ENCODE measurements at regions of chr7 and their contacts with region 1.

Region 1: GRCh38 chr7:128739048-128739962 is at the start of gene CALU:
- DNase-seq: peak; percentile 95
- H3K4me3 Mint-ChIP-seq: peak within 1 kb of the TSS; percentile 100
- H3K27ac Mint-ChIP-seq: peak within 1 kb of the TSS; percentile 98
- H3K4me1 Mint-ChIP-seq: peaks cover 38% of the 10 kb centered on the region
- H3K27me3 Mint-ChIP-seq: no peaks in the 10 kb centered on the region
- CTCF ChIP-seq: no peak
- total RNA-seq, gene CALU: 147 and 184 TPM in 2 replicates

Region 2: GRCh38 chr7:128697302-128697905 is 41.9 kb before region 1 on chr7:
- CTCF ChIA-PET with region 1: no interaction called
- POLR2A ChIA-PET with region 1: no interaction called
- intact Hi-C with region 1: loop called (anchors 5 kb)
- DNase-seq: peak; percentile 75
- H3K4me3 Mint-ChIP-seq: peak overlapping the region; percentile 70
- H3K27ac Mint-ChIP-seq: no peak overlapping the region
- H3K4me1 Mint-ChIP-seq: peaks cover 6% of the 10 kb centered on the region
- H3K27me3 Mint-ChIP-seq: peaks cover 12% of the 10 kb centered on the region
- CTCF ChIP-seq: no peak

Region 3: GRCh38 chr7:128710481-128710880 is 28.8 kb before region 1 on chr7:
- CTCF ChIA-PET with region 1: interaction called, 5 read pairs
- POLR2A ChIA-PET with region 1: interaction called, 9 read pairs
- intact Hi-C with region 1: loop called (anchors 1 kb)
- DNase-seq: peak; percentile 75
- H3K4me3 Mint-ChIP-seq: no peak overlapping the region
- H3K27ac Mint-ChIP-seq: peak overlapping the region; percentile 57
- H3K4me1 Mint-ChIP-seq: peaks cover 14% of the 10 kb centered on the region
- H3K27me3 Mint-ChIP-seq: no peaks in the 10 kb centered on the region
- CTCF ChIP-seq: no peak

Region 4: DNA sequence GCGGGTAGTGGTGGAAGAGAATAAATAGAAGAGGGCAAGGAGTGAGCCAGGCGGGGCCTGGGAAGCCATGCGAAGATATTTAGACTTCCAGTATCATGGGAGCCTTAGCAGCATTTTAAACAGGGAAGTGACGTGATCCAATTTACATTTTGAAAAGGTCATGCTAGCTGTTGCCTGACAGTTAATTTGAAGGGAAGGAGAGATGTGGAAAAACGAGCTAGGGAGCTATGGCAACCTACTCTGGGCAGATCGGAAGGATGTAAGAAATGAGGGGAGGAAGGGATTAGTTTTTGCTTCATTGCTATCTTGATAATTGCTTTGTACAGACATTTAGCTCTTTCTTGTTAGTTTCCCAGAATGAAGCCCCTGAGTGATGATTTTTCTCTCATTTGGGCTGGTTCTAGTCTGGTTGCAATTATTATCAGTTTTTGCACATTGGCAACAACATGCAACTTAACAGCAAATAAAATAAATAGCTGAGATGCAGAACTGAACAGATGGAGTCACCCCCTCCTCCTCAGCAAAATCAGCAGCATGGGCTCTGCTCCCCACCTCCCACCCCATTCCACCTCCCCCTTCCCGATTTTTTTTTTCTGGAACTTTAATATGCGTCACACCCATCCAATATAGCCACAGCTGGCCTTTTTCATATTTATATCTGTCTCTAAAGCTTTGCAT is 13.1 kb before region 1 on chr7:
- CTCF ChIA-PET with region 1: interaction called, 4 read pairs
- POLR2A ChIA-PET with region 1: interaction called, 10 read pairs
- intact Hi-C with region 1: no loop called
- DNase-seq: no peak
- H3K4me3 Mint-ChIP-seq: no peak overlapping the region
- H3K27ac Mint-ChIP-seq: no peak overlapping the region
- H3K4me1 Mint-ChIP-seq: peaks cover 10% of the 10 kb centered on the region
- H3K27me3 Mint-ChIP-seq: peaks cover 12% of the 10 kb centered on the region
- CTCF ChIP-seq: no peak

Region 5: DNA sequence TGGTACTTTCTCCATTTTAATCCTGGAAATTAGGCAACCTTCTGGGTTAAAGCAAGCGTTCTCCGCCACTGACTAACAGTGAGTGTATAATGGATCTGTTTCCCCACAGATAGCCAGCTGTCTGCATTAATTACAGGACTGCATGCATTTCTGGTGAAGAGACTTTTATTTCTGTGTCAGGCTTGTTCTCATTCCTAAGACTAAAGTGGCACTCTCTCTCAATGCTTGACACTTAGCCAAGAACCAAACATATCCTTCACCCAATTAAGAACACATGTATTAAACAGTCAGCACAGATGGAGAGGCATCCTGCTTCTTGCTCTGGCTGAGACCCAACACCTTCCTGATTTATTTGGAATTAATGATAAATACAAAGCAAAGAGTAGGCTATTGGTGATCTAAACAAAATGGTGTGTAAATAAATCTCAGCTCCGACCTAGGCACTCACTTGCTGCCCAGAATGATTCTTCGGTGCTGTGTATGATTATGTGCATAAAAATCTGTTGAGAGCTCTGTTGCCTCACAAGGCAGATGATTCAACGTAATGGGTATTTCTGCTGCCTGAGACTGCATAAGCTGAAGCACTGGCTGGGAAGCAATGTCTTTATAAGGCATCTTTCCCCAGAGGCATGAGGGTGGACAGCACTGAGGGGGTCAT is 16.6 kb after region 1 on chr7:
- CTCF ChIA-PET with region 1: interaction called, 6 read pairs
- POLR2A ChIA-PET with region 1: interaction called, 15 read pairs
- intact Hi-C with region 1: no loop called
- DNase-seq: no peak
- H3K4me3 Mint-ChIP-seq: no peak overlapping the region
- H3K27ac Mint-ChIP-seq: no peak overlapping the region
- H3K4me1 Mint-ChIP-seq: no peaks in the 10 kb centered on the region
- H3K27me3 Mint-ChIP-seq: no peaks in the 10 kb centered on the region
- CTCF ChIP-seq: no peak

Region 6: GRCh38 chr7:128862571-128863432 is 123.5 kb after region 1 on chr7 and contains the start of gene ATP6V1F:
- CTCF ChIA-PET with region 1: no interaction called
- POLR2A ChIA-PET with region 1: interaction called, 48 read pairs
- intact Hi-C with region 1: loop called (anchors 10 kb)
- DNase-seq: peak; percentile 98
- H3K4me3 Mint-ChIP-seq: peak within 1 kb of the TSS; percentile 82
- H3K27ac Mint-ChIP-seq: peak within 1 kb of the TSS; percentile 84
- H3K4me1 Mint-ChIP-seq: peaks cover 14% of the 10 kb centered on the region
- H3K27me3 Mint-ChIP-seq: no peaks in the 10 kb centered on the region
- CTCF ChIP-seq: no peak
- total RNA-seq, gene ATP6V1F: 125 and 152 TPM in 2 replicates

Region 7: GRCh38 chr7:128883622-128884501 is 144.6 kb after region 1 on chr7:
- CTCF ChIA-PET with region 1: interaction called, 12 read pairs
- POLR2A ChIA-PET with region 1: no interaction called
- intact Hi-C with region 1: no loop called
- DNase-seq: peak; percentile 76
- H3K4me3 Mint-ChIP-seq: no peak overlapping the region
- H3K27ac Mint-ChIP-seq: no peak overlapping the region
- H3K4me1 Mint-ChIP-seq: no peaks in the 10 kb centered on the region
- H3K27me3 Mint-ChIP-seq: no peaks in the 10 kb centered on the region
- CTCF ChIP-seq: peak; percentile 90